Psoas muscle (tissue), 8 donors: ENCODE measurements at regions of chr12 and their contacts with region 1.

Region 1: DNA sequence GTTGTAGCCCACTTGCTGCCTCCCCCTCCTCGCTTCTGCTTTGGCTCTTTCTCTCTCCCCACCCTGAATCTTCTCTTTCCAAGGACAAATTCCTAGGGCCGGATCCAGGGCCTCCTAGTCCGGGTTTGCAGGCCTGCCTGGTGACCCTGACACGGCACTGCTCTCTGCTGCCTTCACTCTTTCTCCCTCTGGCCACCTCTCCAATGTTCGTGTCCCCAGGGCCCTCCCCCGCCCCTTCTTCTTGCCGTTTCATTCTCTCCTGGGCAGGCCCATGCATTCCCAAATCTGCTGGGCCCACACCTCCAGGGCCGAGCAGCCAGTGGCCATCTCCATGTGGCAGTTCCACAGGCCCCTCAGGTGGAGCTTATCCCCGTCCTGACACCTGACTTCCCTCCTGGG is 34.0 kb upstream of the CORO1C start:
- DNase-seq: peak in 1 of 2 donors; percentile 7
- ATAC-seq: no peak
- H3K4me3 ChIP-seq: no peak overlapping the region
- H3K27ac ChIP-seq: no peak overlapping the region
- H3K4me1 ChIP-seq: no peaks in the 10 kb centered on the region
- H3K27me3 ChIP-seq: no peaks in the 10 kb centered on the region
- CTCF ChIP-seq: no peak

Region 2: DNA sequence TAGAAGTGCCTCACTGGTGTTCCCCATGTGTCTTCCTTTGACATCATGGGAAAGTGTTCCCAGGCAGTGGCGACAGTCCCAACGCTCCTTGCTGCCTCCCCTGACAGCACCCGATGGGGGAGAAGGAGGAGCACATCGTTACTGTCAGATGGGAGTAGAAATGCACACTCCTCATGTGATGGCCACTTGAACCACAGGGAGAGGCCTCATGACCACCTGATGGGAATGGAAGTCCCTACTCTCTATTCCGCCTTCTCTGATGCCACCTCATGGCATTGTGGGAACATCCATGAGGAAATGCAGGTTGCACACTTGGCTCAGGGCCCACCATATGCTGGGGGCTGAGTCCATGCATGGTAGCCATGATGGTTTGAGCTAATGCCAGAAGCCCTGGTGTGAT is 19.7 kb before region 1 on chr12:
- intact Hi-C with region 1: loop called in 1 of 2 experiments (anchors 2 kb)
- DNase-seq: no peak
- ATAC-seq: peak in 1 of 4 donors; percentile 27
- H3K4me3 ChIP-seq: no peak overlapping the region
- H3K27ac ChIP-seq: no peak overlapping the region
- H3K4me1 ChIP-seq: no peaks in the 10 kb centered on the region
- H3K27me3 ChIP-seq: no peaks in the 10 kb centered on the region
- CTCF ChIP-seq: no peak

Region 3: DNA sequence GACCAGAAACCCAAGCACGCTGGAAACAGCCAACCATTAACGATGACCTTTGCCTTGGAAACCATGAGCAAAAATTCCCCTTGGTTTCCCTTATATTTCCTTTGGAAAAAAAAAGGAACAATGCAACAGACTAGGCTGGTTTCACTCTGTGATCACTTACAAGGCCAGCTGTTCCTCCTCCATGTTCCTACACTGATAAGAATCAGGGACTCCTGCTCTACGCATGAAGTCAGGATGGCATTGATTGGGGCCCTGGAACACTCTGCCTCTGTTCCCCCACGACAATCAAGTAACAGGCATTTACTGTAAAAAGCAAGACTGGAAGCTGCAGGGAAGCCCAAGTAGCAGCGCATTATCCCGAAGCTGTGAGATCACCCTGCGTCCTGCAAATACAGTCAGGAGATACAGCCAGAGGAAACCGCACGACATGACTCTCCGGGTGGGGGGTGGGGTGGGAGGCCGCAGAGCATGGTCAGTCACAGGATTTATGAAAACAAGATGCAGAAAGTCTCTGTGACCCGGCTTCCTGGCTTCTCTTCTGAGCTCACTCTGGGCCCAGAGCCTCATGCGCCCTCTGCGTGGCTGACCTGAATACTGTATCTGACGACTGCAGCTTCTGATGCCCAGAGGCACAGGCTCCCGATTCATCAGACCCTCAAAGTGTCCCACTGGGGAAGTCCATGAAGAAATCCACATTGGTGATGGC is 61.0 kb after region 1 on chr12:
- intact Hi-C with region 1: no loop called
- DNase-seq: peak; percentile 72 to 78
- ATAC-seq: peak; percentile 65 to 78 (median 75)
- H3K4me3 ChIP-seq: peak overlapping the region; percentile 35
- H3K27ac ChIP-seq: peak overlapping the region; percentile 92
- H3K4me1 ChIP-seq: peaks cover 80% of the 10 kb centered on the region
- H3K27me3 ChIP-seq: no peaks in the 10 kb centered on the region
- CTCF ChIP-seq: no peak

Region 4: GRCh38 chr12:108967869-108968540 is 202.7 kb after region 1 on chr12:
- intact Hi-C with region 1: no loop called
- DNase-seq: no peak
- ATAC-seq: no peak
- H3K4me3 ChIP-seq: no peak overlapping the region
- H3K27ac ChIP-seq: peak overlapping the region; percentile 85
- H3K4me1 ChIP-seq: peaks cover 5% of the 10 kb centered on the region
- H3K27me3 ChIP-seq: peaks cover 0 to 1% (median 0%) of the 10 kb centered on the region in 3 donors
- CTCF ChIP-seq: peak; percentile 34

Region 5: GRCh38 chr12:108980831-108981618 is 215.7 kb after region 1 on chr12:
- intact Hi-C with region 1: no loop called
- DNase-seq: no peak
- ATAC-seq: no peak
- H3K4me3 ChIP-seq: no peak overlapping the region
- H3K27ac ChIP-seq: no peak overlapping the region
- H3K4me1 ChIP-seq: no peaks in the 10 kb centered on the region
- H3K27me3 ChIP-seq: peaks cover 0 to 6% (median 0%) of the 10 kb centered on the region in 3 donors
- CTCF ChIP-seq: no peak